ENCODE measurements at regions of chr10 and their contacts with region 1.

Region 1: DNA sequence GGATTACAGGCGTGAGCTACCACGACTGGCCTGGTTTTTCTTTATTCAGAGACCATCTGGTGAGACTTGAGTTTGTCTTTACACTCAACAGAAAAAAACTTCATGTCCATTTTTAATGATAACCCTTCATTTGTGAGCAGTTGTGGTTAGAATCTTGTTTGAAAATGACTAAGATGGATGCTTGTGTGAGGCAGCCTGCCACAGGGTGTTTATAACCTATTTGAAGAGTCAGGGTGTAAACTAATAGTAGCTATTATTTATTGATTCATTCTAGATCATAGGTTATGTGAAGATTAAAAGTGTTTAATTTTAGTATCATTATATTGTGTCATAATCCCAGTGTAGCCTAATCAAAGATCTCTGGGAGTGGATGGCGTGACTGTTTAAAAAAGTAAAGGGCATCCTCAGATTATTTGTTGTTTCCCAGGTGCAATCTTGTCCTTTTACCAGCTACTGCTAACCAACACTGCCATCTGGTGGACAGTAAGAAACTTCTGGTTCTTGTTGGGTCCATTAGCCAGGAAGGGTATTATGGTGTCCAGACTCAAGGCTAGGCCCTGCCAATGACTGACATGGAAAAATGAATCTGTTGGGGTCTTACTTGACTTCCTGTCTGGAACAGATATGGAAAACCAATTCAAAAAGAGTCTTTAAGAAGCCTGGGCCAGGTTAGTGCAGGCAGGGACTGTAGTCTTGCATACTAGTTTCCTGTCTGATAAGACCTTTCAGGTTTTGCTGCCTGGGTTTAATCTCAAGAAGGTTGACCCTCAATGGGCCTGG is 24.9 kb downstream of the NRBF2 start:
- DNase-seq: peak; percentile 84
- H3K4me3 Mint-ChIP-seq: no peak overlapping the region
- H3K27ac Mint-ChIP-seq: no peak overlapping the region
- H3K4me1 Mint-ChIP-seq: peaks cover 19% of the 10 kb centered on the region
- H3K27me3 Mint-ChIP-seq: no peaks in the 10 kb centered on the region

Region 2: GRCh38 chr10:62437696-62438095 is 720.3 kb before region 1 on chr10:
- intact Hi-C with region 1: loop called (anchors 1 kb)
- DNase-seq: peak; percentile 79
- H3K4me3 Mint-ChIP-seq: no peak overlapping the region
- H3K27ac Mint-ChIP-seq: no peak overlapping the region
- H3K4me1 Mint-ChIP-seq: peaks cover 10% of the 10 kb centered on the region
- H3K27me3 Mint-ChIP-seq: peaks cover 30% of the 10 kb centered on the region

Region 3: DNA sequence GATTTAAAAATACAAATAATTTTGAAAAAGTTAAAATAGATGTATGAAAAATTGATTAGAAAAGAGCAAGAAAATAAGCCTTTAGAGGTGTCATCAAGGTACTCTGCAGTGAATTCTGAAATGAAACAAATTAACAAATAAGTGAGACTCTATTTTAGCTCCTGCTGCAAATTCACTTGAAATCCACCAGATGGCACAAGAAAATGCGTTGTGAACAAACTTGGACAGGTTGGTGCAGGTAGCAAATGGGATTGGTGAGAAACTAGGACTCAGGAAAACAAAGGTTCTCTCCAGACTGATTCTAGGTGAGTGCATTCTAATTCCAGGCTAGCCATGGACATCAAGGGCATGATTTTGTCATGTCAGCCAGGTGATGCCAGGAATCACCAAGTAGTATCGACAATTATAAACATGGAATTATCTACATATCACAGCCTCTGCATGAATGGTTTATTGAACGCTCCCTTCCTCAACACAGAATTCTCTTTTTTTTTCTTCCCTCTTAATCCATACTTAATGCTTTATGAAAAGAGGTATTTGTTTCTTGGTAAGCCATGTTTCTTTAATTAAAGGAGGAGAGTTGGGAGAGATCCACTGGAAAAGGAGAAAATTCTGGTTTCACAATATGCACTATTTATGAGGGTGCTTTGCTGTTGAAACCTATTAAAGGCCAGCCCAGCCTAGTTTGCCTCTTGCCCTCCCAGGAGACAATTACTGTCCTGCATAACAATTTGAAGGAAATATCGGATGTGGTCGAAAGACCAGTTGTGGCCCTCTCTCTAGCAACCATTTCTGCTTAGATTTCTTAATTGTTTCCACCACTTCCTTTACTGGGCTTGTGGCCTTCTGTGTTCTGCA is 665.8 kb before region 1 on chr10:
- intact Hi-C with region 1: loop called (anchors 1 kb)
- DNase-seq: peak; percentile 62
- H3K4me3 Mint-ChIP-seq: no peak overlapping the region
- H3K27ac Mint-ChIP-seq: no peak overlapping the region
- H3K4me1 Mint-ChIP-seq: no peaks in the 10 kb centered on the region
- H3K27me3 Mint-ChIP-seq: peaks cover 18% of the 10 kb centered on the region

Region 4: DNA sequence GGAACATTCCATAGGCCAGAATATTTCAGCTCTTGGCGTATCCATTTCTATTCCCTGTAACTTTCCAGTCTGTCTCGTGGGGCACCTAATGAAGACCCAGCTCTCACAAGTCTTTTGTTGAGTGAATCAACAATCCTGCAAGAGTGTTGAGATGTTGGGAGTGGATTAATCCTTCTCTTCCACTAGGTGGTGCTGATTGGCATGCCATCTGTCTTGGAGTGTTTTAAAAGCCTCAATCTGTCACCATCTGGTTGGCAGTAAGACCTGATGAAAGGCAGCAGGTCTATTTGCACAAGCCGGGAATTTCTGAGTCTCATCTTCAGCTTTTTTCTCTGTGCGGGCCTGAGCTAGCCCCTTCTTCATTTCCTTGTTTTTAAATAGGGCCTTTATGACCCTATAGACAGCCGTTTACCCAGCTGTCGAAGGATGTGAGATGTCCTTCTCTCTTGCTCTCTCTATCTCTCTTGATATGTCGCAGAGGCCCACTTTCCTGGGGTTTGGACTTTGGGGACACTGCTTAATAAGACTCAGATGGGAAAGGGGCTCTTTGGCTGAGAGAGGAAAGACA is 603.3 kb before region 1 on chr10:
- intact Hi-C with region 1: loop called (anchors 2 kb)
- DNase-seq: peak; percentile 63
- H3K4me3 Mint-ChIP-seq: no peak overlapping the region
- H3K27ac Mint-ChIP-seq: no peak overlapping the region
- H3K4me1 Mint-ChIP-seq: no peaks in the 10 kb centered on the region
- H3K27me3 Mint-ChIP-seq: peaks cover 40% of the 10 kb centered on the region

Region 5: DNA sequence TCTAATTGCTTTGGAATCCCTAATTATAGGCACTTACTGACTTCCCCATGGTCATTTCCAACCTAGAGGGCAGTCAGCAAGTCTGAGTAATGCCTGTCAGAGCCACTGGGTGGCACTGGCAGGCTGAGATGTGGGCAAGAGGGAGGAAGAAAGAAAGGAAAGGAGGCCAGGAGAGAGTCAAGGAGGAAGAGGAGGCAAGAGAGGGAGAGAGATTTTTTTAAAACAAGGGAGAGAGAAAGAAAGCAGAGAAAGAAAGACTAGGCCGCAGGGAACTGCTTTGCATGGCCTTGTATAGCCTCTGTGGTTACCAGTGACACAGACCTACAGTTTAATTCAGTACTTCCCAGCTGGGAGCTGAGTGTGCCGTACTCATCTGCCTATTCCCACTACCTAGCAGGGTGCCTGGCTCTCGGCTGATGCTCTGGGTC is 563.9 kb before region 1 on chr10:
- intact Hi-C with region 1: loop called (anchors 2 kb)
- DNase-seq: peak; percentile 86
- H3K4me3 Mint-ChIP-seq: no peak overlapping the region
- H3K27ac Mint-ChIP-seq: no peak overlapping the region
- H3K4me1 Mint-ChIP-seq: peaks cover 3% of the 10 kb centered on the region
- H3K27me3 Mint-ChIP-seq: peaks cover 22% of the 10 kb centered on the region

Region 6: GRCh38 chr10:63083904-63084689 is 73.9 kb before region 1 on chr10:
- intact Hi-C with region 1: loop called (anchors 5 kb)
- DNase-seq: peak; percentile 79
- H3K4me3 Mint-ChIP-seq: no peak overlapping the region
- H3K27ac Mint-ChIP-seq: no peak overlapping the region
- H3K4me1 Mint-ChIP-seq: no peaks in the 10 kb centered on the region
- H3K27me3 Mint-ChIP-seq: peaks cover 33% of the 10 kb centered on the region

Region 7: GRCh38 chr10:63133821-63134557 is 24.0 kb before region 1 on chr10:
- intact Hi-C with region 1: loop called (anchors 1 kb)
- DNase-seq: peak; percentile 66
- H3K4me3 Mint-ChIP-seq: peak overlapping the region; percentile 95
- H3K27ac Mint-ChIP-seq: peak overlapping the region; percentile 96
- H3K4me1 Mint-ChIP-seq: peaks cover 27% of the 10 kb centered on the region
- H3K27me3 Mint-ChIP-seq: no peaks in the 10 kb centered on the region

Region 8: DNA sequence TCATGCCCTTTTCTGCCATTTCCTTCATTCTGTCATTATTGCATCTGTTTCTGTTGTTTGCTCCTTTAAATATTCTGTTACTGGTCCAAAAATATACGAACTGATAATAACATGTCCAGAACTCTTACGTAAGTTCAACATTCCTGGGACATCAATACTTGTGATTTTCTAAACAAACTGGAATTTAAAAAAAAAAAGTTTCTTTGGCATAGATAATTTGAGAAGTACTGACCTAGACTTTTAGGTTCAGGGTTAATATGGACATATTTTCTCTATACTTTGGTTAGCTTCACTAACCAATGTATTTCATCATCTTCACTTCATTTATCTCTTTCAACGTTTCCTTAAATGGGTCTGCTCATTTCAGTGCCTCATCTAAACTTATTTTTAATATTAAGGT is 160.5 kb after region 1 on chr10:
- intact Hi-C with region 1: no loop called
- DNase-seq: no peak
- H3K4me3 Mint-ChIP-seq: no peak overlapping the region
- H3K27ac Mint-ChIP-seq: no peak overlapping the region
- H3K4me1 Mint-ChIP-seq: no peaks in the 10 kb centered on the region
- H3K27me3 Mint-ChIP-seq: no peaks in the 10 kb centered on the region

Measured in activated CD4-positive, alpha-beta T cell treated with anti-CD3 and anti-CD28 coated beads, Interleukin-2, amount 10 ng/mL, durations not matched to agents 24 days and 14 days (primary cell).